Activated CD4-positive, alpha-beta T cell treated with anti-CD3 and anti-CD28 coated beads, Interleukin-2, amount 10 ng/mL, durations not matched to agents 24 days and 14 days (primary cell): ENCODE measurements at regions of chr7 and their contacts with region 1.

Region 1: GRCh38 chr7:136359333-136359903 is 382.3 kb upstream of the MTPN start:
- DNase-seq: no peak
- H3K4me3 Mint-ChIP-seq: no peak overlapping the region
- H3K27ac Mint-ChIP-seq: no peak overlapping the region
- H3K4me1 Mint-ChIP-seq: no peaks in the 10 kb centered on the region
- H3K27me3 Mint-ChIP-seq: no peaks in the 10 kb centered on the region

Region 2: DNA sequence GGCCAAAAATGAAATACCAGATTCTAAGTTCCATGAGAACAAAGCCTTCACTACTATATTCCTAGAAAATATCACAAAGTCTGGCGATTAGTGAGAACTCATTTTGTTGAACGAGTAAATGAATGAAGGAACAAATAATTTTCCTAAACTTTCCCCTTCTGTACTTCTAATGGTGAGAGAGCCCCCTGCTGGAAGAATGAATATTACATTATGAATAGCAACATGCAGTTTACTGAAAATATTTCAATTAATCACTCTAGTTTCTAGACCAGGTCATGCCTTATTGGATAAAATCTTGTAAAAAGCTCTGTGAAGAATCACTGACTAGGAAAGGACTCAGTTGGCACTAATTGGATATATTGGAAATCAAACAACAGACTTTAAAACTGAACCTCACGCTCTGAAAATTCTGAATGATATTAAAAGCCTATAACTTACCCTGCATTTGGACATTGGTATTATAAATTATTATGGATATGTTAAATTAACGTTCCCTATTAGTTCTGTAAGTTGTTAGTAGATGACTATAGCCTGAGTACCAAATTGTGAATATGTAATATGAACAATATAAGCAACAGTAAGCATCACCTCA is 349.8 kb before region 1 on chr7:
- intact Hi-C with region 1: loop called (anchors 5 kb)
- DNase-seq: no peak
- H3K4me3 Mint-ChIP-seq: no peak overlapping the region
- H3K27ac Mint-ChIP-seq: no peak overlapping the region
- H3K4me1 Mint-ChIP-seq: peaks cover 4% of the 10 kb centered on the region
- H3K27me3 Mint-ChIP-seq: peaks cover 8% of the 10 kb centered on the region